Activated B cell treated with CpG ODN at 0.5 μM for 24 hours (primary cell): ENCODE measurements at regions of chr2 and their contacts with region 1.

Region 1: GRCh38 chr2:225668606-225669266 is 269.2 kb downstream of the NYAP2 start:
- DNase-seq: no peak
- ATAC-seq: peak; percentile 79
- H3K4me3 Mint-ChIP-seq: no peak overlapping the region
- H3K27ac Mint-ChIP-seq: no peak overlapping the region
- H3K4me1 Mint-ChIP-seq: no peaks in the 10 kb centered on the region
- H3K27me3 Mint-ChIP-seq: peaks cover 5% of the 10 kb centered on the region
- CTCF ChIP-seq: peak; percentile 29

Region 2: DNA sequence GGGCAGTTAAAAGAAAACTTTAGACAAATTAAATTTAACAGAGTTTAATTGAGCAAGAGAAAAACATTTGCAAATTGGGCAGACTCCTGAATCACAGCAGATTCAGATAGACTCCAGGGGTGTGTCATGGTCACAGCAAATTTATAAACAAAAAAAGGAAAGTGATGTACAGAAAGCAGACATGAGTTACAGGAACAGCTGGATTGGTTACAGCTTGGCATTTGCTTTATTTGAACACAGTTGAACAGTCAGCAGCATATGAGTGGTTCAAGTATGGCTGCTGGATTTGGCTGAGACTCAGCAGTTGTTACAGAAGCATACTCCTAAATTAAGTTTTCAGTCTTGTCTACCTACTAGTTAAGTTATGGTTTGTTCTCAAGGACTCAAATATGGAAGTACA is 351.6 kb before region 1 on chr2:
- CTCF ChIA-PET with region 1: no interaction called
- POLR2A ChIA-PET with region 1: no interaction called
- intact Hi-C with region 1: no loop called
- DNase-seq: no peak
- ATAC-seq: no peak
- H3K4me3 Mint-ChIP-seq: no peak overlapping the region
- H3K27ac Mint-ChIP-seq: no peak overlapping the region
- H3K4me1 Mint-ChIP-seq: no peaks in the 10 kb centered on the region
- H3K27me3 Mint-ChIP-seq: no peaks in the 10 kb centered on the region
- CTCF ChIP-seq: no peak

Region 3: GRCh38 chr2:225598897-225599296 is 69.8 kb before region 1 on chr2:
- CTCF ChIA-PET with region 1: no interaction called
- POLR2A ChIA-PET with region 1: no interaction called
- intact Hi-C with region 1: no loop called
- DNase-seq: no peak
- ATAC-seq: no peak
- H3K4me3 Mint-ChIP-seq: no peak overlapping the region
- H3K27ac Mint-ChIP-seq: no peak overlapping the region
- H3K4me1 Mint-ChIP-seq: no peaks in the 10 kb centered on the region
- H3K27me3 Mint-ChIP-seq: no peaks in the 10 kb centered on the region
- CTCF ChIP-seq: no peak

Region 4: DNA sequence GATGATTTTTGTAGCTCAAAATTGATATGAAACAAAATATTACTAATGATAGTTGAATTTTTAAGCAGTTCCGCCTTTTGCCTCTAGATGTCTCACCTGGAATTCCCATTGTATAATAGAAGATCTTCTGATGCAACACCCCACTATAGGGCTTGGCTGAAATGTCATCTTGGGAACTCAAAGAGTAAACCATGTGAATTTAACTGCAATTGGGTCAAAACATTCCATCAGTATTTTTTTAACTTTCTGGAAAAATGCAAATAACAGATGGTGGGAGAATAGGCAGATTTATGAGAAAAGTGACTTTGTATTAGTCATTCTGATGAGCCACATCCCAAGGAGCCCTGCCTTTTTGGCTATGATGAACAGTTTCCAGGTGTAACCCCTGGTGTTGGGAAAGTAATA is 220.7 kb after region 1 on chr2:
- CTCF ChIA-PET with region 1: no interaction called
- POLR2A ChIA-PET with region 1: no interaction called
- intact Hi-C with region 1: loop called (anchors 1 kb)
- DNase-seq: no peak
- ATAC-seq: peak; percentile 47
- H3K4me3 Mint-ChIP-seq: no peak overlapping the region
- H3K27ac Mint-ChIP-seq: no peak overlapping the region
- H3K4me1 Mint-ChIP-seq: no peaks in the 10 kb centered on the region
- H3K27me3 Mint-ChIP-seq: peaks cover 4% of the 10 kb centered on the region
- CTCF ChIP-seq: no peak